Activated CD4-positive, alpha-beta T cell treated with anti-CD3 and anti-CD28 coated beads, Interleukin-2, amount 10 ng/mL, durations not matched to agents 7 days and 5 days (primary cell): ENCODE measurements at regions of chr11 and their contacts with region 1.

Region 1: GRCh38 chr11:123246749-123247495 is 51.9 kb upstream of the CLMP start:
- DNase-seq: peak; percentile 89
- H3K4me3 Mint-ChIP-seq: no peak overlapping the region
- H3K27ac Mint-ChIP-seq: no peak overlapping the region
- H3K4me1 Mint-ChIP-seq: peaks cover 12% of the 10 kb centered on the region
- H3K27me3 Mint-ChIP-seq: peaks cover 13% of the 10 kb centered on the region

Region 2: DNA sequence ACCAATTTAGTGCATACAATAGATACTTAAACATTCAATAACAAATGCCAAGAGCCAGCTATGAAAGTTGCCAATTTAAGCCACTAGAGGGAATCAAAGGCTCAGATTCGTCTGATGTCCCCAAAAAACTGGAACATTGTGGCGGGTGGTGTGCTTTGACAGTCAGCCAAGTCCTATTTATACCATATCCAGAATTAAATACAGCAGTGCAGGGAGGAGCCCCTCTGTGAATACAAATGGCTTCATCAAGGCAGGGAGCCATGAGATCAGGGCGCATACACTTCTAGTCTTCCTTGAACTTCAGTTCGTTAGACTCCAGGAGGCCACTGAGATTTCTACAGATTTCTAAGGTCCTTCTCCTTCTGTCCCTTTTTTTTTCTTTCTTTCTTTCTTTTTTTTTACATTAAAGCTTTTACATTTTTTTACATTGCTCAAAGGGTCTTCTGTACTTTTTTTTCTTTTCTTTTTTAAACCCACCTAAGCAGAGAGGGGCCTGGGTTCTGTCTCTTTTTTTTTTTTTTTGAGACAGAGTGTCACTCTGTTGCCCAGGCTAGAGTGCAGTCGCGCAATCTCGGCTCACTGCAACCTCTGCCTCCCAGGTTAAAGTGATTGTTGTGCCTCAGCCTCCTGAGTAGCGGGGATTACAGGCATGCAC is 143.5 kb before region 1 on chr11:
- CTCF ChIA-PET with region 1: interaction called, 36 read pairs
- POLR2A ChIA-PET with region 1: no interaction called
- DNase-seq: peak; percentile 54
- H3K4me3 Mint-ChIP-seq: no peak overlapping the region
- H3K27ac Mint-ChIP-seq: no peak overlapping the region
- H3K4me1 Mint-ChIP-seq: peaks cover 34% of the 10 kb centered on the region
- H3K27me3 Mint-ChIP-seq: peaks cover 9% of the 10 kb centered on the region

Region 3: GRCh38 chr11:123110356-123110755 is 136.6 kb before region 1 on chr11:
- CTCF ChIA-PET with region 1: interaction called, 36 read pairs
- POLR2A ChIA-PET with region 1: no interaction called
- DNase-seq: no peak
- H3K4me3 Mint-ChIP-seq: peak overlapping the region; percentile 39
- H3K27ac Mint-ChIP-seq: peak overlapping the region; percentile 31
- H3K4me1 Mint-ChIP-seq: peaks cover 9% of the 10 kb centered on the region
- H3K27me3 Mint-ChIP-seq: peaks cover 29% of the 10 kb centered on the region

Region 4: GRCh38 chr11:123116486-123116885 is 130.4 kb before region 1 on chr11:
- CTCF ChIA-PET with region 1: interaction called, 33 read pairs
- POLR2A ChIA-PET with region 1: no interaction called
- DNase-seq: no peak
- H3K4me3 Mint-ChIP-seq: no peak overlapping the region
- H3K27ac Mint-ChIP-seq: no peak overlapping the region
- H3K4me1 Mint-ChIP-seq: peaks cover 5% of the 10 kb centered on the region
- H3K27me3 Mint-ChIP-seq: peaks cover 16% of the 10 kb centered on the region

Region 5: DNA sequence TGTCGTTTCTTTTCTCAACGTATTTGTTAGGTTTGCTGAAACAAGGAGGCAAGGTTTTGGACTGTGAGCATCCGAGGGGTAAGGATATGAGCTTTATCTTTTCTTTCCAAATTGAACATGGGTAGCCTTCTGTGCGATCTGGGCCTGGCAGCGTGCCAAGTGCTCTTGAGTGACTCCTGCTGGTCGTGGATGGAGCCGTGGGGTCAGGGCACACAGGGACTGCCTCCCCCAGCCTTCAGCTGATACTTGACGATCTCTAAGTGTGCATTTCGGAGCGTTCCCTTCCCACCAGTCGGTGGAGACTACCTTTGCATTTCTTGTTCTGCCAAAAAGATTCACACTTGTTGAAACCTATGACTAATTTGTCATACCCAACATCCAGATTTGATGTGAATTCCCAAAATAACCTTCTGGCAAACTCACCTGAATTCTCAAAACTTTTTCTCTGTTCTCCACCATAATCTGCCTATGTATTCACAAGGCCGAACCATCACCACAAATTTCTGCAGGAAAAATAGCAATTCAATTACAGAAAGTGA is 11.7 kb before region 1 on chr11:
- CTCF ChIA-PET with region 1: interaction called, 29 read pairs
- POLR2A ChIA-PET with region 1: no interaction called
- DNase-seq: peak; percentile 26
- H3K4me3 Mint-ChIP-seq: no peak overlapping the region
- H3K27ac Mint-ChIP-seq: peak overlapping the region; percentile 15
- H3K4me1 Mint-ChIP-seq: peaks cover 39% of the 10 kb centered on the region
- H3K27me3 Mint-ChIP-seq: peaks cover 5% of the 10 kb centered on the region

Region 6: DNA sequence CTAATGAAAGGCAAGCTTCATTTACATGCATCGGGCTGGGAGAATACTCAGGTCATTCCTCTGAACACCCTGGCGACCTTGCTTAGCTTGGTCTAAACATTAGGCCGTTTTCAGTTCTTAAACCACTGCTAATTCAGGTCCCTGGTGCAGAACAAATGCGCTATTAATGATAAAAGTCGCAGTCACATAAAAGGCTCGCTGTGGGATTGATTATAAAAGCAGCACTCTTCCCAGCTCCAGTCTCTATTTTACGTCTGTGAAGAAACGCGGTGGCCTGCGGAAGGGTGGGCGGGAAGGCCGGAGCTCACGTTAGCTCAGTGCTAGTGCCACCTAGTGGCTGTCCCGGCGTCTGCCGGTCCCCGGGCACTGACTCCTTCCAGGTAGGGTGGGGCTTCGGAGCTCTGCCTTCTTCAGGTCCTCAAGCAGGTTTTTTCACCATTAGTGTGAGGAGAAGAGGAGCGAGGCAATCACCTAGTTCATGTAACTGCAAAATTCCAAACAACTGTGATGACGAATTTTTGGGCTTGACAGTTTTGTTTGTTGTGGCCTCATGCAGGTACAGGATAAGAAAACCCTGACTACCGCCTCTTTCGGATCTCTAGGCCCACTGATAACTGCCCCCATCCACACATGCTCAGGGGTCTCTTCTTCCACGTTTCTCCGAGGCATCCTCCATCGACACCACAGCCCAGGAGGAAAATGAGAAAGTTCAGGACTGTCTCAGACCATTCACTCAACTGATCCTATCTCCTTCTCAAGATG is 14.6 kb after region 1 on chr11:
- CTCF ChIA-PET with region 1: interaction called, 17 read pairs
- POLR2A ChIA-PET with region 1: no interaction called
- DNase-seq: peak; percentile 75
- H3K4me3 Mint-ChIP-seq: peak overlapping the region; percentile 43
- H3K27ac Mint-ChIP-seq: no peak overlapping the region
- H3K4me1 Mint-ChIP-seq: peaks cover 19% of the 10 kb centered on the region
- H3K27me3 Mint-ChIP-seq: peaks cover 20% of the 10 kb centered on the region